Activated CD4-positive, alpha-beta T cell treated with anti-CD3 and anti-CD28 coated beads for 36 hours (primary cell): ENCODE measurements at regions of chr6 and their contacts with region 1.

Region 1: DNA sequence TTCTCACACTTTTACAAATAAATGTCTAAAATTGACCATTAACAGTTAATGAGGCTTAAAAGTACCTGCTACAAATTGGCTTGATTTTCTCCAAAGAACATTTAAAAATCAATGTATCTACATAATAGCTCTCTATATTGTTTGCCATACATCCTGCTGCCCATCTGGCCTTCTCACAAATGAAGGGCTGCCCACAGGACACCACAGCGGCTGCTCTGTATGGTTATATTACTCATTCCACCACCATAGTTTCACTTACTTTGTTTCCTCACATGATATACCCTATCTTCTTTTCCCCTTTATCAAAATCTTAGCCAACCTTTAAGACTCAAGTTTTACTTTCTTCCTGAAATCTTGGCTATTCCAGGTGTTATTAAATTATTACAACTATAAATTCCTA is 407.7 kb upstream of the HTR1E start:
- DNase-seq: no peak
- ATAC-seq: no peak
- H3K4me3 Mint-ChIP-seq: no peak overlapping the region
- H3K27ac Mint-ChIP-seq: no peak overlapping the region
- H3K4me1 Mint-ChIP-seq: no peaks in the 10 kb centered on the region
- H3K27me3 Mint-ChIP-seq: no peaks in the 10 kb centered on the region

Region 2: GRCh38 chr6:86448398-86448797 is 81.2 kb before region 1 on chr6:
- CTCF ChIA-PET with region 1: no interaction called
- POLR2A ChIA-PET with region 1: no interaction called
- intact Hi-C with region 1: no loop called
- DNase-seq: no peak
- ATAC-seq: no peak
- H3K4me3 Mint-ChIP-seq: no peak overlapping the region
- H3K27ac Mint-ChIP-seq: no peak overlapping the region
- H3K4me1 Mint-ChIP-seq: no peaks in the 10 kb centered on the region
- H3K27me3 Mint-ChIP-seq: no peaks in the 10 kb centered on the region

Region 3: GRCh38 chr6:86516087-86516486 is 13.5 kb before region 1 on chr6:
- CTCF ChIA-PET with region 1: no interaction called
- POLR2A ChIA-PET with region 1: no interaction called
- intact Hi-C with region 1: no loop called
- DNase-seq: no peak
- ATAC-seq: no peak
- H3K4me3 Mint-ChIP-seq: no peak overlapping the region
- H3K27ac Mint-ChIP-seq: no peak overlapping the region
- H3K4me1 Mint-ChIP-seq: no peaks in the 10 kb centered on the region
- H3K27me3 Mint-ChIP-seq: no peaks in the 10 kb centered on the region

Region 4: GRCh38 chr6:86820750-86821149 is 291.1 kb after region 1 on chr6:
- CTCF ChIA-PET with region 1: no interaction called
- POLR2A ChIA-PET with region 1: no interaction called
- intact Hi-C with region 1: no loop called
- DNase-seq: no peak
- ATAC-seq: no peak
- H3K4me3 Mint-ChIP-seq: no peak overlapping the region
- H3K27ac Mint-ChIP-seq: no peak overlapping the region
- H3K4me1 Mint-ChIP-seq: no peaks in the 10 kb centered on the region
- H3K27me3 Mint-ChIP-seq: no peaks in the 10 kb centered on the region

Region 5: GRCh38 chr6:86848986-86849385 is 319.4 kb after region 1 on chr6:
- CTCF ChIA-PET with region 1: no interaction called
- POLR2A ChIA-PET with region 1: no interaction called
- intact Hi-C with region 1: loop called in 1 of 2 experiments (anchors 5 kb)
- DNase-seq: no peak
- ATAC-seq: no peak
- H3K4me3 Mint-ChIP-seq: no peak overlapping the region
- H3K27ac Mint-ChIP-seq: no peak overlapping the region
- H3K4me1 Mint-ChIP-seq: no peaks in the 10 kb centered on the region
- H3K27me3 Mint-ChIP-seq: peaks cover 7% of the 10 kb centered on the region